ENCODE measurements at regions of chr14 and their contacts with region 1.

Region 1: DNA sequence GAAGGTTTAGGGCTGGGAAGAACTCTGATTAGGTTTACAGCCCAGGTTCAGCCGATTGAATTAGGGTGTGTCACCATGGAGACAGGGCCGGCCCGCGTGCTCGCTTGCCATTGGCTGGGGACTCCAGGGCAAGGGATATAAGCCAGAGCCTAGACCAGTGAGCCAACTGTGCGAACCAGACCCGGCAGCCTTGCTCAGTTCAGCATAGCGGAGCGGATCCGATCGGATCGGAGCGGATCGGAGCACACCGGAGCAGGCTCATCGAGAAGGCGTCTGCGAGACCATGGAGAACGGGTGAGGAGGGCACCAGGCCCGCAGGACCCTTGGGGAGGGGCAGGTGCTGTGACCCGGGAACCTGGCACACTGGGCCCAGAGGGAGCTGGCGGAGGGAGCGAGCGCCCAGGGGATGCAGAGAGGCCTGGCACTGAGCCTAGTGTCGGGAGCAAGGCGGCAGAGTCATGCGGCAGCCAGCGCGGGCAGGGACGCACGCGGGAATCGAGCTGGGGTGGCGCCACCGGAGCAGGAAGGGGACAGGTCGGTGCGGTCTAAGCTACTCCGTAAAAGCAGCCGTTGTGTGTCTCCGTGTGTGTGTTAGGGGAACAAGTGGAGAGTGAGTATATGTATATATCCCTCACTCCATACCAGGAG is at the start of gene PNP:
- DNase-seq: peak; percentile 76 to 94 (median 82)
- H3K4me3 ChIP-seq: peak within 1 kb of the TSS; percentile 90
- H3K4me3 Mint-ChIP-seq: peak within 1 kb of the TSS; percentile 94 to 100 (median 98)
- H3K27ac ChIP-seq: peak within 1 kb of the TSS; percentile 82
- H3K27ac Mint-ChIP-seq: peak within 1 kb of the TSS; percentile 78 to 100 (median 97)
- H3K4me1 ChIP-seq: peaks cover 41% of the 10 kb centered on the region
- H3K4me1 Mint-ChIP-seq: peaks cover 41 to 51% (median 50%) of the 10 kb centered on the region in 3 donors
- H3K27me3 ChIP-seq: no peaks in the 10 kb centered on the region
- H3K27me3 Mint-ChIP-seq: no peaks in the 10 kb centered on the region
- total RNA-seq, gene PNP: 181 to 188 TPM

Region 2: DNA sequence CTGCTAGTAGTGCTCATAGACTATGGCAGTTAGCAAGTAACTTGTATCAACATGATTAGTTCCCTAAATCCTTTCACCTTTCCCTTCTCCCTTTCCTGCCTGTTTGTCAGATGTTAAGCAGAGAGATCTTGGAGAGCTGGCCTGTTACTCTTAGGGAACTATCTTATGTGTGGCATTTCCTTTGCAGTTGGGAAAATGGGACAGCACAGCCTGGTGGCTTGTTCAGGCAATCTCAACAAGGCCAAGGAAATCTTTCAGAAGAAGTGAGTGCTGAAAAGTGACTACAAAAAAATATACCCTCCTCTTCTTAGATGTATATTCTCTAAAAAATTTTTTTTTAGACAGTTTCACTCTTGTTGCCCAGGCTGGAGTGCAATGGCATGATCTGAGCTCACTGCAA is 118.5 kb before region 1 on chr14:
- CTCF ChIA-PET with region 1: no interaction called
- POLR2A ChIA-PET with region 1: no interaction called
- DNase-seq: no peak
- H3K4me3 ChIP-seq: no peak overlapping the region
- H3K4me3 Mint-ChIP-seq: no peak overlapping the region
- H3K27ac ChIP-seq: no peak overlapping the region
- H3K27ac Mint-ChIP-seq: peak overlapping the region in 2 of 8 donors; percentile 54 to 62
- H3K4me1 ChIP-seq: no peaks in the 10 kb centered on the region
- H3K4me1 Mint-ChIP-seq: peaks cover 2 to 4% (median 2%) of the 10 kb centered on the region in 3 donors
- H3K27me3 ChIP-seq: no peaks in the 10 kb centered on the region
- H3K27me3 Mint-ChIP-seq: no peaks in the 10 kb centered on the region

Region 3: GRCh38 chr14:20454516-20455354 is 14.6 kb before region 1 on chr14 and contains the starts of genes APEX1 and OSGEP:
- CTCF ChIA-PET with region 1: interaction called, 5 read pairs
- POLR2A ChIA-PET with region 1: interaction called, 18 read pairs
- DNase-seq: peak; percentile 96 to 99 (median 97)
- H3K4me3 ChIP-seq: peak within 1 kb of the TSS; percentile 78
- H3K4me3 Mint-ChIP-seq: peak within 1 kb of the TSS in 1 of 7 donors; percentile 44
- H3K27ac ChIP-seq: peak within 1 kb of the TSS; percentile 87
- H3K27ac Mint-ChIP-seq: no peak within 1 kb of the TSS
- H3K4me1 ChIP-seq: peaks cover 25% of the 10 kb centered on the region
- H3K4me1 Mint-ChIP-seq: peaks cover 20 to 36% (median 30%) of the 10 kb centered on the region in 3 donors
- H3K27me3 ChIP-seq: no peaks in the 10 kb centered on the region
- H3K27me3 Mint-ChIP-seq: no peaks in the 10 kb centered on the region
- total RNA-seq, gene APEX1: 242 to 248 TPM
- total RNA-seq, gene OSGEP: 58.0 to 58.1 TPM

Region 4: GRCh38 chr14:20494935-20495766 is 25.8 kb after region 1 on chr14:
- CTCF ChIA-PET with region 1: no interaction called
- POLR2A ChIA-PET with region 1: no interaction called
- DNase-seq: no peak
- H3K4me3 ChIP-seq: no peak overlapping the region
- H3K4me3 Mint-ChIP-seq: no peak overlapping the region
- H3K27ac ChIP-seq: no peak overlapping the region
- H3K27ac Mint-ChIP-seq: peak overlapping the region in 1 of 8 donors; percentile 29
- H3K4me1 ChIP-seq: peaks cover 27% of the 10 kb centered on the region
- H3K4me1 Mint-ChIP-seq: peaks cover 22 to 39% (median 28%) of the 10 kb centered on the region in 3 donors
- H3K27me3 ChIP-seq: no peaks in the 10 kb centered on the region
- H3K27me3 Mint-ChIP-seq: peaks cover 0 to 1% of the 10 kb centered on the region in 2 donors

Measured in CD8-positive, alpha-beta memory T cell (primary cell).